PC-9 (cell line): ENCODE measurements at regions of chr14 and their contacts with region 1.

Region 1: DNA sequence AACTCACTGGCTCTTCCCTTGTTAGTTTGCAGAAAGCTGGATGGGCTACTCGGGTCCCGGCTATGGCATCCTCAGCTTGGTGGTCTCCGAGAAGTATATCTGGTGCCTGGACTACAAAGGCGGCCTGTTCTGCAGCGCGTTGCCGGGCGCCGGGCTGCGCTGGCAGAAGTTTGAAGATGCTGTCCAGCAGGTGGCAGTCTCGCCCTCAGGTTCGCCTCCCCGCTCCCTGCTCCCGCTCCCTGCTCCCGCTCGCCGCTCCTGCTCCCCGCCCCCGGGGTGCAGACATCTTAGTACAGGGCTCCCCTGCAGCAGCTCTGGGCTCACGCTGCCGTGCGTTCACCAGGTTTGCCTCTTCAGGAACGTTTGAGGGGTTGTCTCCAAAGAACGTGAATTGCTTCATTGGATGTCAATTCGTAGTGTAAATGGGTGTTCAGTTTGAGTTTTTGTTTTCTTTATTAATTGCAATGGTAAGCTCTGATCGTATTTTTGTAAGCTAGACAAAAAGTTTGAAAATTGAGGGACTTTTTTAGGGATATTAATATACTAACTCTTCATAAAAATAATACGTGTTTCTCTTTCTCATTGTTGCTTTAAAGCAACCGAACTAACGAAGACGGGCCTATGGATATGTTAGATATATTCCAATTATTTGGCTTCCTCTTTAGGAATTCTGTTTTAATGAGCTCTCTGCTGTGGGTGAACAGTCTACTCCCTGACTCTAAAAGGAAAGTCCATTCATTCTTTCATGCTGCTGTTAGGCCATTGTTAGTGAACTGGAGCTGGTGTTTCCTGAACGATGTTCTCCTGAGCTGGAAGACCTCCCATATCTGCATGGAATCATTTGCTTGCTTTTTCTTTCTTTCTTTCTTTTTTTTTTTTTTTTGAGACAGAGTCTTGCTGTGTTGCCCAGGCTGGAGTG is 71.3 kb downstream of the ANKRD9 start:
- DNase-seq: peak; percentile 68 to 90
- H3K4me3 ChIP-seq: no peak overlapping the region
- H3K27ac ChIP-seq: no peak overlapping the region
- H3K4me1 ChIP-seq: peaks cover 33% of the 10 kb centered on the region
- H3K27me3 ChIP-seq: no peaks in the 10 kb centered on the region
- CTCF ChIP-seq: peak; percentile 98

Region 2: GRCh38 chr14:101584055-101584859 is 854.0 kb before region 1 on chr14:
- CTCF ChIA-PET with region 1: no interaction called
- POLR2A ChIA-PET with region 1: no interaction called
- intact Hi-C with region 1: no loop called
- DNase-seq: no peak
- H3K4me3 ChIP-seq: no peak overlapping the region
- H3K27ac ChIP-seq: no peak overlapping the region
- H3K4me1 ChIP-seq: no peaks in the 10 kb centered on the region
- H3K27me3 ChIP-seq: peaks cover 39% of the 10 kb centered on the region
- CTCF ChIP-seq: no peak

Region 3: DNA sequence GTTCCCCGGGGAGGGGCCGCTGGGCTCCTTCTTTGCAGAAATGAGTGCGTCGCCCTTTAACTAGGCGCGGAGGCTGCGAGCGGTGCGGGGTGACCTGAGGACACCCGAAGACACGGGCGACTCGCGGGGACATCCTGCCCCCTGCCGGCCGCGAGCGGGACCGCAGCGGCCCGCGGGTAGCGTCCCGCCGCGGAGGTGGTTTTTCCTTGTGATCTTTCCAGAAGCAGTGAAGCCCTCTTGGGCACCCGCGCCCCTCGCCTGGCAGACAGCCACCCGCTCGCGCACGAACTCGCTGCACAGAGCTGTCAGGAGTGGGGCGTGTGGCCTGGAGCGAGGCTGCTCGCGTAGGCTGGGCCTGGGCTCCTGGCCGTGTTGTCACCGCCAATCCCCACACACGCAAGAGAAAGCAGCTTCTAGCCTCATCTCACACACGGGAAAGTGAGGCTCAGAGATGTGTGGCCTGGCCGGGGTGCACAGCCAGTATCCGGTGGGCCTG is 809.7 kb before region 1 on chr14:
- CTCF ChIA-PET with region 1: no interaction called
- POLR2A ChIA-PET with region 1: no interaction called
- intact Hi-C with region 1: loop called (anchors 2 kb)
- DNase-seq: peak; percentile 64 to 92
- H3K4me3 ChIP-seq: no peak overlapping the region
- H3K27ac ChIP-seq: no peak overlapping the region
- H3K4me1 ChIP-seq: peaks cover 19% of the 10 kb centered on the region
- H3K27me3 ChIP-seq: no peaks in the 10 kb centered on the region
- CTCF ChIP-seq: peak; percentile 100

Region 4: GRCh38 chr14:102390064-102390855 is 48.0 kb before region 1 on chr14:
- CTCF ChIA-PET with region 1: no interaction called
- POLR2A ChIA-PET with region 1: no interaction called
- intact Hi-C with region 1: no loop called
- DNase-seq: peak in 1 of 2 experiments; percentile 56
- H3K4me3 ChIP-seq: no peak overlapping the region
- H3K27ac ChIP-seq: peak overlapping the region; percentile 61
- H3K4me1 ChIP-seq: peaks cover 11% of the 10 kb centered on the region
- H3K27me3 ChIP-seq: no peaks in the 10 kb centered on the region
- CTCF ChIP-seq: no peak

Region 5: DNA sequence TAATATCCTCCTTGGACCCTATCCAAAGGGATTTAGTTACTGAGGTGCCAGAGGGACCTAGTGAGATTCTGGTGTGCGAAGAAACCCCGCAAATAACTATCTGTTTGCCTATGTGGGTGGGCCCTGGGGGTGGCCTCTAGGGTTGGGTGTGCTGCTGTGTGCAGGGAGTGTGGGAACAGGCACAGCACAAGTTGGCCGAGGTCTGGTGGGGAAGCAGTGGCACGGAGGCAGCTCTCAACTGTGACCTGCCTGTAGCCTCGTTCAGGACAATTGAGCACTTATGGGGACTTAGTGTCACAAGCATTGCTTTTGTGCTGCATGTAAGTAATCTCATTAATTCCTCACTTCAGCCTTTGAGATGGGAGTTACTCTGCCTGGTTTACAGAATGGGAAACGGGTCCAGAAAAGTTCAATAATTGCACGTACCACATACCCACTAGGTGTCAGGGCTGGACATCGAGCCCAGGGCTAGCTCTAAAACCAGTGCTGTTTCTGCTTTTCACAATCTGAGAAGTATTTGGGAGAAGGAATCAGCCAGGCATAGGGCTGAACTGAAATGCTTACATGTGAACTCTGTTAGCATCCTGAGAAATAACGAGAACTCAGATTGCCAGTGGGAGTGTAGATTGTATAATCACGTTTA is 16.7 kb before region 1 on chr14:
- CTCF ChIA-PET with region 1: no interaction called
- POLR2A ChIA-PET with region 1: no interaction called
- intact Hi-C with region 1: no loop called
- DNase-seq: no peak
- H3K4me3 ChIP-seq: no peak overlapping the region
- H3K27ac ChIP-seq: no peak overlapping the region
- H3K4me1 ChIP-seq: no peaks in the 10 kb centered on the region
- H3K27me3 ChIP-seq: no peaks in the 10 kb centered on the region
- CTCF ChIP-seq: no peak

Region 6: GRCh38 chr14:102479777-102480176 is 41.5 kb after region 1 on chr14:
- CTCF ChIA-PET with region 1: interaction called, 10 read pairs
- POLR2A ChIA-PET with region 1: interaction called, 3 read pairs
- intact Hi-C with region 1: loop called (anchors 2 kb)
- DNase-seq: no peak
- H3K4me3 ChIP-seq: no peak overlapping the region
- H3K27ac ChIP-seq: no peak overlapping the region
- H3K4me1 ChIP-seq: peaks cover 19% of the 10 kb centered on the region
- H3K27me3 ChIP-seq: no peaks in the 10 kb centered on the region
- CTCF ChIP-seq: no peak

Region 7: DNA sequence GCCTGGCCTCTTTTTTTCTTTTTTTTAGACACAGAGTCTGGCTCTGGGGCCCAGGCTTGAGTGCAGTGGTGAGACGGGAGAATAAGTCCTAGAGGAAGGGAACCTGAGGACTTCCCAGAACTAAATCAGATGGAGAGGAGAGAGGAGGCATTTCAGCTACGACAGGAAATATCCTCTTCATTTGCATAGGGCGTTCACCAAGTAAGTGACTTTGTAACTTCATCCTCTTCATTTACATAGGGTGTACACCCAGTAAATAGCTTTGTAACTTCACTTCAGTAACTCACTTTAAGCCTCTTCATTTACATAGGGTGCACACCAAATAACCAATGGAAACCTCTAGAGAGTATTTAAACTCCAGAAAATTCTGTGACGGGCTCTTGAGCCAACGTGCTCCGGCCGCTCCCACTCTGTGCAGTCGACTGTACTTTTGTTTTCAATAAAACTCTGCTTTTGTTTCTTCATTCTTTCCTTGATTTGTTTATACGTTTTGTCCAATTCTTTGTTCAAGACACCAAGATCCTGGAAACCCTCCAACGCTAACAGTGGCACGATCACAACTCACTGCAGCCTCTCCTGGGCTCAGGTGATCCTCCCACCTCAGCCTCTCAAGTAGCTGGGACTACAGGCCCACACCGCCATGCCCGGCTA is 92.7 kb after region 1 on chr14:
- CTCF ChIA-PET with region 1: interaction called, 10 read pairs
- POLR2A ChIA-PET with region 1: no interaction called
- intact Hi-C with region 1: no loop called
- DNase-seq: peak; percentile 28 to 55
- H3K4me3 ChIP-seq: no peak overlapping the region
- H3K27ac ChIP-seq: 0 out of 2 replicates have a peak overlapping the region, but pooled peaks have one; percentile 8
- H3K4me1 ChIP-seq: peaks cover 55% of the 10 kb centered on the region
- H3K27me3 ChIP-seq: no peaks in the 10 kb centered on the region
- CTCF ChIP-seq: no peak

Region 8: DNA sequence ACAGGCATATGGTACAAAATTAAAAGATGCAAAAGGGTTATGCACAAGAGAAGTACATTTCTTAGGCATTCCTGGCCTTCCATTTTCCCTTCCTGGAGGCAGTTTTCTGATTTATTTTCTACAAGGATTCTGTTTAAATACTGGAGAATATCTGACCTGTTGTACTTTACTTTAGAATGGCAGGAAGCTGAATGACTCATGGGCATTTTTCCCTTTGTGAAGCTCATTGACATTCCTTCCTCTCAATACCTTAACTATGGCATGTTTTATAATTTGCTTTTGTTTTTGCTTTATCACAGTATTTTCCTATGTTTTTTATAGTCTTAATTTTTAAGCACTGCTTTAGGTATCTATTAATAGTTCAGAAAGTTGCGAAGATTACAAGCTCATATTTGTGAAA is 216.9 kb after region 1 on chr14:
- CTCF ChIA-PET with region 1: no interaction called
- POLR2A ChIA-PET with region 1: no interaction called
- intact Hi-C with region 1: no loop called
- DNase-seq: peak; percentile 25 to 85
- H3K4me3 ChIP-seq: no peak overlapping the region
- H3K27ac ChIP-seq: peak overlapping the region; percentile 49
- H3K4me1 ChIP-seq: peaks cover 30% of the 10 kb centered on the region
- H3K27me3 ChIP-seq: no peaks in the 10 kb centered on the region
- CTCF ChIP-seq: no peak

Region 9: DNA sequence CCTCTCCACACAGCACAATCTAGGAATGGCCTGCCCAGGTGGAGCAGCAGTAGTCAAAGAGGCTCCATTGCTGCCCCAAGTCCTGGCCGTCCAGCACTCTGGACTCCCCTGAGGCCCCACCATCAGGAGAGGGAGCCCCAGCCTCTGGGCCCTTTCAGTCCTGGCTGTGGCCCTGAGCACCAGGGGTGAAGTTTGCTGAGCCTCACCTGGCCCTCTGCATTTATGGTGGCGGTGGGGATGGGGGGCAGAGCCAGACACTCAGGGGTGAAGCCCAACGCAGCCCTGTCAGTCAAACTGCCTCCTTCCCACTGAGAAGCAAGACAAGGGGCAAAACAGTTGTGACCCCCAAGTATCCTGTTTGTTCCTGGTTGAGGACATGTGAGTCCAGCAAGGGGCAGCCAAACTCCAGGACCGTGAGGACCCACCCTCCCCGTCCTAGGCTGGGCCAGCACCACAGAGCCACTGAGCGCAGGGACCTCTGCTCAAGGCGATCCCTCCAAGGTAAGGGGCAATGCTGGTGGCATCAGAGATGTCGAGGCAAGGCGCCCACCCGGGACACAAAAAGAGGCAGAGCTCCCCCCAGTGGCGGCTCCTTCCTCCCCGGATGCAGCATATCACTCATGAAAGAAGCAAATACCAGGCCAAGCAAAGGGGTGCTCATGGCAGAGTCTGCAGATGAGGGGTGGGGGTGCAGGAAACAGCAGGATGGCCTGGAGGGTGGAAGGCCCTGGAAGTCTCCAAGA is 479.4 kb after region 1 on chr14:
- CTCF ChIA-PET with region 1: no interaction called
- POLR2A ChIA-PET with region 1: no interaction called
- intact Hi-C with region 1: loop called (anchors 5 kb)
- DNase-seq: peak in 1 of 2 experiments; percentile 54
- H3K4me3 ChIP-seq: no peak overlapping the region
- H3K27ac ChIP-seq: no peak overlapping the region
- H3K4me1 ChIP-seq: no peaks in the 10 kb centered on the region
- H3K27me3 ChIP-seq: no peaks in the 10 kb centered on the region
- CTCF ChIP-seq: peak; percentile 82